Right cardiac atrium (tissue), 5 donors: ENCODE measurements at regions of chr12 and their contacts with region 1.

Region 1: GRCh38 chr12:46473634-46474329 is 101.2 kb upstream of the SLC38A2 start:
- DNase-seq: peak; percentile 76 to 88 (median 79)
- ATAC-seq: peak; percentile 95 to 97
- H3K4me3 ChIP-seq: peak overlapping the region; percentile 18
- H3K27ac ChIP-seq: peak overlapping the region; percentile 88
- H3K4me1 ChIP-seq: peaks cover 11% of the 10 kb centered on the region
- H3K27me3 ChIP-seq: no peaks in the 10 kb centered on the region

Region 2: DNA sequence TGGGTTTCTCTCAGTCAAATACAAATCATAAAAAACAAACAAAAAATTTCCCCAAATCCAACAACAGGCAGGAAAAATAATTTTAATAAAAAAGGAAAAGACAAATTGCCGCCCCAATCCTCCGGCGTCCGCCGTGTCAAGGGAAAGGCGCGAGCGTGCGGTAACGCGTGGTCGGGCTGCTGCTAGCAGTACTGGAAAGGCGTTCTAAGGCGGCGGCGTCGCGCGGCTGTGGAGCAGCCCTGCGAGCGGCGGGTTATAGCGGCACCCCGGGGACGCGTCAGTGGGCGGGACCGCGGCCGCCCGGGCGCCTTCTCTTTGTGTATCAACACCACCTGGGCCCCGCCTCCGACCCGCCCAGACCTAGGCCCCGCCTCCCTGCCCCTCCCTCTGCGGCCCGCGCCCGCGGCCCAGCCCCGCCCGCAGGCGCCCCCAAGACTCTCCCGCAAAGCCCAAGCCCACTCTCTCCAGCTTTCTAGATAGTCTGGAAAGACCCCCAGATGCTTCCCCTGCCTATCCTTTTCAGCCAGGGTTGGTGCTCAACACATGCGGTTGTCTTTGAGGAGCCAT is 101.2 kb before region 1 on chr12 and contains the start of gene SLC38A2:
- intact Hi-C with region 1: loop called in 1 of 4 experiments (anchors 5 kb)
- DNase-seq: peak; percentile 98 to 100 (median 99)
- ATAC-seq: peak; percentile 97 to 98
- H3K4me3 ChIP-seq: peak within 1 kb of the TSS; percentile 87
- H3K27ac ChIP-seq: peak within 1 kb of the TSS; percentile 97
- H3K4me1 ChIP-seq: peaks cover 9% of the 10 kb centered on the region
- H3K27me3 ChIP-seq: no peaks in the 10 kb centered on the region
- total RNA-seq, gene SLC38A2: 87.3 to 143 (median 115) TPM

Region 3: DNA sequence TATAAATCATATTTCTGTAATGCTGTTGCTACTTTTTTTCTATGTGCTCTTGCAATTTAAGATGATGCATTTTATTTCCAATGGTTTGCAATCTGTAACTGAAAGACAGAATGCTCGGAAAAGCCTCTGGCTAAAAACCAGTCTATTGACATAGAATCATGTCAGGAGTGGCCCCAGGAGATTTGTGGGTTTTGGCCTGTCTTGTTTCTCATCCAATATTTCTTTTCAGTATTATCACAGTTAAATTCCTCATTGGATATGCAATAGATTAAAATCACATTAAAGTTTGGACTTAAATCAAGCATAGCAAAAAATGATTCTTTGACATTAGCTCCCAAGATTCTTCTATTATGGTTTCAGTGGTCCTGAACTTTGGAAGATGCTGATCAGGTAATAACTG is 82.2 kb before region 1 on chr12:
- intact Hi-C with region 1: loop called in 2 of 4 experiments (anchors 5 to 10 kb)
- DNase-seq: peak in 1 of 3 donors; percentile 49
- ATAC-seq: no peak
- H3K4me3 ChIP-seq: no peak overlapping the region
- H3K27ac ChIP-seq: no peak overlapping the region
- H3K4me1 ChIP-seq: peaks cover 7% of the 10 kb centered on the region
- H3K27me3 ChIP-seq: no peaks in the 10 kb centered on the region

Region 4: DNA sequence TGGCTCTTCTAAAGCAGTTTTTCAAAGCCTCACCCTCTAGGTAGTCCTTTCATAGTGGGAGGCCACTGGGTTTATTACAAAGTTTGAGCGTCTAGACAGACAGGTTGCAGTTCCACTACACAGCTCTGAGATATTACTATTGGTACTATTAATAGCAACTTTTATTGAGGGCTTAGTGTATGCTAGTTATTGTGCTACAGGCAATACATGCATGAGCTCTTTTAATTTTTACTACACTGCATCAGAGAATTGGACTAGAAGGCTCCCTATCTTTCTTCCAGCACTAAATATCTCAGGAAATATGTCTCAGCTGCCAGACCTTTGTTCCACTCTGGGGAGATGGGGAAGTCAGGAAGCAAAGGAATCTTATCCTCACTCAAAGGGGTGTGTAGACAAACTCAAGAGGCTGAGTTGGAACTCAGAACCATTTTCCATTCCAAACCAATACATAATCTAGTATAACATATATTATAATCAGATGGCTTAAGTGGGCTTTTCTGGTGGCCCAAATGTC is 60.6 kb after region 1 on chr12:
- intact Hi-C with region 1: loop called in 1 of 4 experiments (anchors 10 kb)
- DNase-seq: no peak
- ATAC-seq: peak; percentile 79 to 87
- H3K4me3 ChIP-seq: no peak overlapping the region
- H3K27ac ChIP-seq: no peak overlapping the region
- H3K4me1 ChIP-seq: peaks cover 8% of the 10 kb centered on the region
- H3K27me3 ChIP-seq: no peaks in the 10 kb centered on the region